Mammary epithelial cell (primary cell): ENCODE measurements at regions of chr2 and their contacts with region 1.

Region 1: GRCh38 chr2:3651691-3652648 is 6.0 kb upstream of the ALLC start:
- DNase-seq: no peak
- H3K4me3 ChIP-seq: peak overlapping the region in 1 of 3 experiments; percentile 4
- H3K27ac ChIP-seq: no peak overlapping the region
- H3K4me1 ChIP-seq: peaks cover 11% of the 10 kb centered on the region
- H3K27me3 ChIP-seq: no peaks in the 10 kb centered on the region
- CTCF ChIP-seq: no peak

Region 2: DNA sequence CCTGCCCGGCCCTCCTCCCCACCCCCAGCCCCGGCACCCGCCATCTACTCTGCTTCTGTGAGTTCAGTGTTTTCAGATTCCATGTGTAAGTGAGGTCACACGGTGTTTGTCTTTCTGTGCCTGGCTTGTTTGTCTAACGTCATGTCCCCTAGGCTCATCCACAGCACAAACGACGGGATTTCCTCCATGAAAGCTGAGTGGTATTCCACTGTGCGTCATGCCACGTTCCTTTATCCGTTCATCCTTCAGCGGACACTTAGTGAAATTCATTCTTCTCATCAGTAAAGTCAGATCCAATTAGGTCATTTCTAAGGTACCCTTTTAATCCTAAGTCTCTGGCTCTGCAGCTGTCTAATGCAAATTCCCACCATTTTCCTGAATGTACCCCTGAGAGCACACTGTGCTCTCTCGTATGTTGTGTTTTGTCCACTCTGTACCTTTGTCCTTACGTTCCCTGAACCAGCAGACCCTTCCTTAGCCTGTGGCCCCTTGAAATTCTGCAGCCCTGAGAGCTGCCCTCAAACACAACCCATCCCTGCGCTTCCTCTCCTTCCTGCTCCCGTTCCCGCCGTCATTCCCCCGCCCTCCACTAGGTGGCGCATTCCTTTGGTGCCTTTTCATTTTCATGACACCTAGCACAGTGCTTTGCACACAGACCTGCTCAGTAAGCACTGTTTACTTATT is 228.3 kb before region 1 on chr2:
- CTCF ChIA-PET with region 1: no interaction called
- dilution Hi-C with region 1: no loop called
- in situ Hi-C with region 1: no loop called
- intact Hi-C with region 1: loop called (anchors 1 kb)
- DNase-seq: peak; percentile 35
- H3K4me3 ChIP-seq: no peak overlapping the region
- H3K27ac ChIP-seq: no peak overlapping the region
- H3K4me1 ChIP-seq: no peaks in the 10 kb centered on the region
- H3K27me3 ChIP-seq: no peaks in the 10 kb centered on the region
- CTCF ChIP-seq: peak; percentile 97 to 100

Region 3: DNA sequence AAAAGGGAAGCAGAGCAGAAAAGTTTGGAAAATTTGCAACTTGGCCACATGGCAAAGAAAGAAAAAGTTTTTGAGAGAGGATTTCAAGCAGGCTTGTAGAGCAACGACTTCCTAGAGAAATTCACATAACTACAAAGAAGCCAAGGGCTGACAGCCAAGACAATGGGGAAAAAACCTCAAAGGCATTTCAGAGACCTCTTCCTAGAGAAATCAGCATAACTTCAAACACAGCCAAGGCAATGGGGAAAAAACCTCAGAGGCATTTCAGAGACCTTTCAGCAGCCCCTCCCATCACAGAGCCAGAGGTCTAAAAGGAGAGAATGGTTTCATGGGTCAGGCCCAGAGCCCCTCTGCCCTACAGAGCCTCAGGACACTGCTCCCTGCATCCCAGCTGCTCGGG is 139.9 kb before region 1 on chr2:
- CTCF ChIA-PET with region 1: no interaction called
- dilution Hi-C with region 1: no loop called
- in situ Hi-C with region 1: no loop called
- intact Hi-C with region 1: no loop called
- DNase-seq: no peak
- H3K4me3 ChIP-seq: no peak overlapping the region
- H3K27ac ChIP-seq: no peak overlapping the region
- H3K4me1 ChIP-seq: no peaks in the 10 kb centered on the region
- H3K27me3 ChIP-seq: no peaks in the 10 kb centered on the region
- CTCF ChIP-seq: no peak

Region 4: DNA sequence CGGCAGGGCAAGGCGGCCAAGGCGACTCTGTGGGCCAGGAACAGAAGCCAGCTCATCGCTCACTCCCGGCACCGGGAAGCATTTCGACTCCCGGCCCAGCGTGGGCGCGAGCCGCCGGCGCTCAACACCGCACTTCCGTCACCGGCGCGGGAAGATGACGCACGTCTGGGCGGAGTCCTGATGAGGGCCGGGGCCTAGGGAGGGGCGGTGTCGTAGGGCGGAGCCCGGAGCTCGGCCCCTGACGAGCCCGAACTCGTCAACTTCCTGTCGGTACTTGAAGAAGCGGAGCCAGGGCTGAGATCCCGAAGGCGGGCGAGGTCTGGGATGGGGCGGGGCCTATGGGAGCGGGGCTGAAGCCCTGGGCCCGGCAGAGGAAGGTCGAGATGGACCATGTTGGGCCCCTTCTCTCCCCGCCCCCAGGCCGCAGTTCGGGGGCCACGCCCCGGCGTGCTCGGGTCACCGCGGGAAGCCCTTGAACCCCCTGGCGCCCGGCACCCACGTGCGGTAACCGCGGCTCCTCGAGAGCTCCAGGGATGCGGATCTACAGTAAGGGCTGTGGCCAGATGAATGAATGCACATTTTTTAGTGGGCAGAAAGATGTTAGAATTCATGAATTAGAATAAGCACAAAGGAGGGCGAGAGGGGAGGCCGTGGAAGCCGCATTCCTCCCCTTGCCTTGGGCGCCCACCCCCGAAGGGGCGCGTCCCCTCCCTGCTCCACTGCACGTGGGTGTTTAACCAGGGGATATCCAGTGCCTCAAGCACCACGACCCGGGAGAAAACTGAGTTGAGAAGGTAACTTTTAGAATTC is 93.6 kb before region 1 on chr2 and contains the start of gene RNASEH1:
- CTCF ChIA-PET with region 1: no interaction called
- dilution Hi-C with region 1: no loop called
- in situ Hi-C with region 1: no loop called
- intact Hi-C with region 1: loop called (anchors 2 kb)
- DNase-seq: peak; percentile 98
- H3K4me3 ChIP-seq: peak within 1 kb of the TSS; percentile 81 to 86 (median 83)
- H3K27ac ChIP-seq: peak within 1 kb of the TSS; percentile 74
- H3K4me1 ChIP-seq: peaks cover 10% of the 10 kb centered on the region
- H3K27me3 ChIP-seq: no peaks in the 10 kb centered on the region
- CTCF ChIP-seq: no peak
- total RNA-seq, gene RNASEH1: 29.2 to 33.7 TPM

Region 5: GRCh38 chr2:3581367-3582262 is 70.4 kb before region 1 on chr2:
- CTCF ChIA-PET with region 1: no interaction called
- dilution Hi-C with region 1: no loop called
- in situ Hi-C with region 1: no loop called
- intact Hi-C with region 1: loop called (anchors 2 kb)
- DNase-seq: no peak
- H3K4me3 ChIP-seq: no peak overlapping the region
- H3K27ac ChIP-seq: no peak overlapping the region
- H3K4me1 ChIP-seq: peaks cover 22% of the 10 kb centered on the region
- H3K27me3 ChIP-seq: no peaks in the 10 kb centered on the region
- CTCF ChIP-seq: no peak

Region 6: GRCh38 chr2:3594493-3595281 is 57.3 kb before region 1 on chr2 and contains the start of gene COLEC11:
- CTCF ChIA-PET with region 1: no interaction called
- dilution Hi-C with region 1: no loop called
- in situ Hi-C with region 1: no loop called
- intact Hi-C with region 1: loop called (anchors 2 kb)
- DNase-seq: no peak
- H3K4me3 ChIP-seq: no peak within 1 kb of the TSS
- H3K27ac ChIP-seq: no peak within 1 kb of the TSS
- H3K4me1 ChIP-seq: no peaks in the 10 kb centered on the region
- H3K27me3 ChIP-seq: no peaks in the 10 kb centered on the region
- CTCF ChIP-seq: no peak
- total RNA-seq, gene COLEC11: not detected